ENCODE measurements at regions of chr4 and their contacts with region 1.

Region 1: GRCh38 chr4:122922877-122923511 is 597 bp upstream of the NUDT6 start:
- ATAC-seq: peak; percentile 90 to 95 (median 94)
- H3K4me3 ChIP-seq: peak overlapping the region; percentile 64 to 92 (median 79)
- H3K27ac ChIP-seq: peak overlapping the region in 1 of 2 donors; percentile 88
- H3K4me1 ChIP-seq: peaks cover 9% of the 10 kb centered on the region in 2 donors

Region 2: DNA sequence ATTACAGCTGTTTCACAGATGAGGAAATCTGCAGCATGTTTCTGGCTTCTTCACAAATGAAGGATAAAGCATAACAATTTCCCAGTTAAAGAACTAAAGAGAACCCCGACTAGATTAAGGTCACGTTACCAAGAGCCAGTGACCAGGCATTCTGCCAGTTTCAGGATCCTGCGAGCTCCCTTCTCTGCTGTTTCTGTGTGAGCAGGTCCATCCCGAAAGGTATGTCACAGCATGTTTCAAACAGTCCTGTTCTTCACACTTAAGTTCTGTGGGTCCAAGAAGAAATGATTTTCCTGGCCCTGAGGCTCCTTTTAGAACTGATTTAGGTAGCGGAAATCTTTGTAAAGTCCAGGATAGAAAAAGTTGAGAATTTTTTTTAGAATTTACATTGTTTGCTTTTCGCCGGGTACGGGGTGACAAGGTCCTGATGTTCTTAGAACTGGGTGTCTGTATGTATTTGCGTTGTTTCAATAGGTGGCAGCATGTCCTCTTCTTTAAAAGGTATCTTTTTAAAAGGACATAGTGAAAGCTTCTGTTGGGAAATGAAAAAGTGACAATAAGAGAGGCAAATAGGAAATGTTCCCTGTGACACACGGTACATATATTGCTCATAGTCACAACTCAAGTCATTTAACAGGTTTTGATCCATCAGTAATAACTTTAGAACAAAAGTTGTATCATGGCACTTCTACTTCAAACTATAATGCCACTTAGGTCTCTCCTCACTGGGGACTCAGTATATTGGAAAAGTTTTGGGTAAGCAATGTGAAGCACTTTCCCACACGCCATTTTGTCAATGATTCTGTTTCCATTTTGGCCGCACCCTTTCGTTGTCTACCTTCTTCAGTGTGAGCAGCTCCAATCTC is 320.5 kb before region 1 on chr4:
- in situ Hi-C with region 1: loop called in 3 of 9 experiments (anchors 25 kb)
- ATAC-seq: peak in 4 of 8 experiments; percentile 53 to 98 (median 92)
- H3K4me3 ChIP-seq: no peak overlapping the region
- H3K27ac ChIP-seq: no peak overlapping the region
- H3K4me1 ChIP-seq: no peaks in the 10 kb centered on the region

Region 3: GRCh38 chr4:122758033-122758432 is 165.0 kb before region 1 on chr4:
- in situ Hi-C with region 1: loop called in 4 of 9 experiments (anchors 10 to 25 kb)
- ATAC-seq: peak in 2 of 8 experiments; percentile 22 to 44
- H3K4me3 ChIP-seq: no peak overlapping the region
- H3K27ac ChIP-seq: no peak overlapping the region
- H3K4me1 ChIP-seq: no peaks in the 10 kb centered on the region